ENCODE measurements at regions of chr10 and their contacts with region 1.

Region 1: DNA sequence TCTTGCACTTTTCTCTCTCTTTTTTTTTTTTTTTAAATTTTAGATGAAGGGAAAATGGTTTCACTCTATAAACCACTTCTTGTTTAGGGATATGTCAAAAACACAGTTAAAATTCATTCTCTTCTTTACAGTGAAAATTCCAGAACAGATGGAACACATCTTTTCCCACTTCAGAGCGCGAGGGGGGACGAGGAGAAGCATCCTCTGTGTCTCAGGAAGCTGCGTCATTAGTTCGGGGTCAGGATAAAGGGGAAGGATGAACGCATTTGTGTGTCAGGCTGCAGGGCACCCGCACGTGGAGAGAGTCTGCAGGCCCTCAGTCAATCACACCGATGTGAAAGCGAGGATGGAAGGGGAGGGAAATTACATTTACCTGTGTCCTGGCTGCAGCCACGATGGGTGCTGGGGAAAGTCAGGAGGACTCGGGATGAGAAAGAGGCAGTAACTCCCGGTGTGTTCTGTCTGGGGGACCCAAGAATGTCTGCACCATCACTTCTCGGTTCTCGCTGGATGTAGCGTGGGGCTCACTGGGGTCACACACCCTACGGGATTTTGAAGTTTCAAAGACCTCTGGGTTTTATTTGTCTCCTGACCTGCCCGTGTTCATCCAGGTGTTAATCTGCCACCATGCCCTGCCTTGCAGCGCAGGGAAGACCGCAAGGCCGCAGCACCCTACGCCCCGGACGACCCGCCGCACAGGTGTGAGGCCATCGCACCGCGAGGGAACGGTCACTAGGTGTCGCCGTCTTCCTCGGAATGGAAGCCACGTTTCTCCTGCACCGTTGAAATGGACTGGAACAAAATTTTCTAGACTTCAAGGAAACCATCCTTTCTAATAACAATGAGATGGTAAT is 66.7 kb upstream of the PITRM1 start:
- DNase-seq: peak; percentile 78
- H3K4me3 ChIP-seq: no peak overlapping the region
- H3K27ac ChIP-seq: peak overlapping the region; percentile 80
- H3K4me1 ChIP-seq: peaks cover 11% of the 10 kb centered on the region
- H3K27me3 ChIP-seq: no peaks in the 10 kb centered on the region
- CTCF ChIP-seq: peak; percentile 86 to 87
- POLR2A ChIP-seq: no peak

Region 2: GRCh38 chr10:2985729-2986232 is 253.5 kb before region 1 on chr10:
- CTCF ChIA-PET with region 1: no interaction called
- POLR2A ChIA-PET with region 1: no interaction called
- dilution Hi-C with region 1: no loop called
- intact Hi-C with region 1: no loop called
- DNase-seq: peak; percentile 65
- H3K4me3 ChIP-seq: no peak overlapping the region
- H3K27ac ChIP-seq: no peak overlapping the region
- H3K4me1 ChIP-seq: peaks cover 10% of the 10 kb centered on the region
- H3K27me3 ChIP-seq: peaks cover 0 to 2% of the 10 kb centered on the region in 2 experiments
- CTCF ChIP-seq: no peak
- POLR2A ChIP-seq: no peak

Region 3: GRCh38 chr10:3197348-3198003 is 41.8 kb before region 1 on chr10:
- CTCF ChIA-PET with region 1: interaction called, 13 read pairs
- POLR2A ChIA-PET with region 1: no interaction called
- dilution Hi-C with region 1: no loop called
- intact Hi-C with region 1: loop called (anchors 1 kb)
- DNase-seq: peak; percentile 86
- H3K4me3 ChIP-seq: peak overlapping the region in 2 of 3 experiments; percentile 1 to 6
- H3K27ac ChIP-seq: no peak overlapping the region
- H3K4me1 ChIP-seq: peaks cover 12% of the 10 kb centered on the region
- H3K27me3 ChIP-seq: peaks cover 0 to 6% of the 10 kb centered on the region in 2 experiments
- CTCF ChIP-seq: peak; percentile 93 to 96
- POLR2A ChIP-seq: no peak

Region 4: GRCh38 chr10:3217301-3217700 is 22.0 kb before region 1 on chr10:
- CTCF ChIA-PET with region 1: no interaction called
- POLR2A ChIA-PET with region 1: no interaction called
- dilution Hi-C with region 1: no loop called
- intact Hi-C with region 1: no loop called
- DNase-seq: no peak
- H3K4me3 ChIP-seq: no peak overlapping the region
- H3K27ac ChIP-seq: no peak overlapping the region
- H3K4me1 ChIP-seq: peaks cover 6% of the 10 kb centered on the region
- H3K27me3 ChIP-seq: no peaks in the 10 kb centered on the region
- CTCF ChIP-seq: no peak
- POLR2A ChIP-seq: no peak

Region 5: DNA sequence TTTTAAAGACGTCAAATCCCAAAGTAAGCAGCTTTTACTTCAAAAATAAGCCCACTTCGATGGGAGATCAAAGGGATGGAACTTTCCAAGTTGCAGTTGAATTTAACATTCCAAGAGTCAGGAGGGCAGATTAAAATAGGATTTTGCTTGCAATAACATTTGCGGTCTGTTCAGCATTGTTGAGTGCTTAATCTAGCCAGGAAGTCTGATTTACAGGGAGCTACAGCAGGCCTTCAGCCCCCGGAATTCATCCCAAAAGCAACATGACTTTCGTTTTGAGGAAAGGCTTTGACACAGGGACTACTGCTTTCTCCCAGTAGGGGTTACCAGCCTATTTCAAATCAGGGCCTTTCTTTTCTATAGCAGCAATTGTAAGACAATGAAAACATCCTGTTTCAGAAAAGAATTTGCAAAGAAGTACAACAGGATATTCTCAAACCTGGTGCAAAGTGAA is 212.9 kb after region 1 on chr10:
- CTCF ChIA-PET with region 1: interaction called, 4 read pairs
- POLR2A ChIA-PET with region 1: no interaction called
- dilution Hi-C with region 1: no loop called
- intact Hi-C with region 1: loop called (anchors 1 kb)
- DNase-seq: peak; percentile 85
- H3K4me3 ChIP-seq: no peak overlapping the region
- H3K27ac ChIP-seq: peak overlapping the region; percentile 98
- H3K4me1 ChIP-seq: peaks cover 43% of the 10 kb centered on the region
- H3K27me3 ChIP-seq: no peaks in the 10 kb centered on the region
- CTCF ChIP-seq: peak; percentile 30 to 40
- POLR2A ChIP-seq: no peak

Region 6: GRCh38 chr10:3747984-3748383 is 508.7 kb after region 1 on chr10:
- CTCF ChIA-PET with region 1: no interaction called
- POLR2A ChIA-PET with region 1: no interaction called
- dilution Hi-C with region 1: no loop called
- intact Hi-C with region 1: loop called (anchors 1 kb)
- DNase-seq: peak; percentile 89
- H3K4me3 ChIP-seq: no peak overlapping the region
- H3K27ac ChIP-seq: peak overlapping the region; percentile 49
- H3K4me1 ChIP-seq: peaks cover 16% of the 10 kb centered on the region
- H3K27me3 ChIP-seq: no peaks in the 10 kb centered on the region
- CTCF ChIP-seq: no peak
- POLR2A ChIP-seq: no peak

Region 7: DNA sequence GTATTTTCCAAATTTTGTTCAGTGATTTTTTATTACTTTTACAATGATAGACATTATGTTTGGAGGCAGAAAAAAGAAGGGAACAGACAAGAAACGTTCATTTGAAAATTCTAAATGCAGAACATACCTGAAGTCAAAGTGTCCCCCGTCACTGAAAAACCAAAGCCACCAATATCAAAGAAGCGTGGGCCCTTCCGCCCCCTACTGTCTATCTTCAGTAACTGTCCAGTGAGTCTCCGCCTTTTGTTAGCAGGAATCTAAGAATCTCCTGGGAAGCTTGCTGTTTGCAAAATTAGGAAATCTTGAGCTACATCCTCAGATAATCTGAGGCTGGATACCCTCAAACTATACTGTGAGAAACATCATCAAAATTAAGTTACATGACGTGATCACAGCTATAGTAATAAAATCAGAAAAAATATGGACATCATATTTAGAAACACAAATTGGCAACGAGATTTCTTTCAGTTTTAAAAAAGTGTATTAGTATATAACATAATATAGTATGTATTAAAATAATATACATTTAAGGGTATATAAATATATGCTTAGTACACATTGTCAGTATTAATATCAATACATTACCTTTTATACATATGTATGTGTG is 1417.4 kb after region 1 on chr10:
- CTCF ChIA-PET with region 1: interaction called, 4 read pairs
- POLR2A ChIA-PET with region 1: no interaction called
- dilution Hi-C with region 1: no loop called
- intact Hi-C with region 1: loop called (anchors 1 kb)
- DNase-seq: peak; percentile 80
- H3K4me3 ChIP-seq: no peak overlapping the region
- H3K27ac ChIP-seq: peak overlapping the region; percentile 47
- H3K4me1 ChIP-seq: peaks cover 4% of the 10 kb centered on the region
- H3K27me3 ChIP-seq: no peaks in the 10 kb centered on the region
- CTCF ChIP-seq: peak; percentile 77 to 82
- POLR2A ChIP-seq: no peak

Measured in endothelial cell of umbilical vein (primary cell).